Naive thymus-derived CD8-positive, alpha-beta T cell (primary cell): ENCODE measurements at regions of chr17 and their contacts with region 1.

Region 1: DNA sequence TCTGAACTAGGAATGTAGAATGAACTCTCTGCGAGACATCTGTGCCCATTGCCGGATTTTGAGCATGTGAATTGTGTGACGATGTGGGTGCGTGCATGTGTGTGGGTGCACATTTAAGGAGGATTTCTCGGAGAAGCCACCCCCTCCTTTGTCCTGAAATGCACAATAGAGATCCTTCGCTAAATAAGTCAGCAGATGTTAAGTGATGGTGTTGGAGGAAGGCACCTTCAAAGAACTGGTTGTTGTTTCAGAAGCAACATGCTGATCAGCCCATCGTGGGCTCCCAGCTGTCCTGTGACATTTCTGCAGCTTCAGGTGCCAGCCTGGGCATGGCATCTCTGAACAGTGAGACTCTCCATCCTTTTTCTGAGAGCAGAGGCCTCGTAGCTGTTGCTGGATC is 194.9 kb downstream of the MSI2 start:
- DNase-seq: no peak
- ATAC-seq: no peak
- H3K4me3 Mint-ChIP-seq: peak overlapping the region in 2 of 10 donors; percentile 22 to 37
- H3K27ac Mint-ChIP-seq: peak overlapping the region in 2 of 10 donors; percentile 30 to 56
- H3K4me1 Mint-ChIP-seq: peaks cover 28 to 70% (median 67%) of the 10 kb centered on the region in 4 donors
- H3K27me3 Mint-ChIP-seq: no peaks in the 10 kb centered on the region

Region 2: GRCh38 chr17:57406131-57406980 is 44.8 kb before region 1 on chr17:
- POLR2A ChIA-PET with region 1: no interaction called
- DNase-seq: no peak
- ATAC-seq: no peak
- H3K4me3 Mint-ChIP-seq: peak overlapping the region in 7 of 10 donors; percentile 2 to 60 (median 42)
- H3K27ac Mint-ChIP-seq: peak overlapping the region in 8 of 10 donors; percentile 37 to 87 (median 71)
- H3K4me1 Mint-ChIP-seq: peaks cover 53 to 69% (median 58%) of the 10 kb centered on the region in 4 donors
- H3K27me3 Mint-ChIP-seq: no peaks in the 10 kb centered on the region

Region 3: DNA sequence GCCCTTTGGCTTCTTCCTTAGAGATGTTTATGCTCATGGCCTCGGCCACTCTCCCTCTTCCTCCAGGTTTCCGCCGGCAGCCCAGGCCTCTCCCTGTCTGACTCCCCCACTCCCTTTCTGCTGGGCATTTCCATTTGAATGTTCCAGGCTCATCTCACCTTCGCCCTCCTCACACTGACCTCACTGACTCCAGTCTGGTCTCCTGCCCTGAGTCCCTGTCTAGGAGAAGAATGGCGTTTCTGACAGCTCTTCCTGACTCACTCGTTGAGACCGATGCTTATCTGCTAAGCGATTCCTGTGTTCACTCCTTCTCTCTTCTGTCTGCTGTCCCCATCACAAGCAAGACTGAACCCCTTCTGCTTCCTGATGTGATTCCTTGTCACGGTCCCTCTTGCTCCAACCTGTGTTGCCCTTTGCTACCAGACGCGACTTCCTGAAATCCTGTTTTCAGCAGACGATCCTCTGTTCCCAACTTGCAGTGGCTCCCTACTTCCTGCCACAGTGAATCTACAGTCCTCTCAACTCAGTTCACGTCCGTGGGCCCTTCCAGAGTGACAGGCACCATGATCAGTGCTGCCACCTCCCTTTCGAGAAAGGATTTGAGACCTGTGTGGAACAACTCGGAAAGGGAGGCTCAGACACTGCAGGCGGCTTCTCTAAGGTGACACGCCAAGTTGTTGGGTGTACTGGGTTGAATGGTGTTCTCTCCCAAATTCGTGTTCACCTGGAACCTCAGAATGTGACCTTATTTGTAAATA is 18.5 kb before region 1 on chr17:
- POLR2A ChIA-PET with region 1: no interaction called
- DNase-seq: no peak
- ATAC-seq: no peak
- H3K4me3 Mint-ChIP-seq: no peak overlapping the region
- H3K27ac Mint-ChIP-seq: peak overlapping the region in 4 of 10 donors; percentile 26 to 87 (median 50)
- H3K4me1 Mint-ChIP-seq: peaks cover 32 to 68% (median 47%) of the 10 kb centered on the region in 4 donors
- H3K27me3 Mint-ChIP-seq: no peaks in the 10 kb centered on the region

Region 4: DNA sequence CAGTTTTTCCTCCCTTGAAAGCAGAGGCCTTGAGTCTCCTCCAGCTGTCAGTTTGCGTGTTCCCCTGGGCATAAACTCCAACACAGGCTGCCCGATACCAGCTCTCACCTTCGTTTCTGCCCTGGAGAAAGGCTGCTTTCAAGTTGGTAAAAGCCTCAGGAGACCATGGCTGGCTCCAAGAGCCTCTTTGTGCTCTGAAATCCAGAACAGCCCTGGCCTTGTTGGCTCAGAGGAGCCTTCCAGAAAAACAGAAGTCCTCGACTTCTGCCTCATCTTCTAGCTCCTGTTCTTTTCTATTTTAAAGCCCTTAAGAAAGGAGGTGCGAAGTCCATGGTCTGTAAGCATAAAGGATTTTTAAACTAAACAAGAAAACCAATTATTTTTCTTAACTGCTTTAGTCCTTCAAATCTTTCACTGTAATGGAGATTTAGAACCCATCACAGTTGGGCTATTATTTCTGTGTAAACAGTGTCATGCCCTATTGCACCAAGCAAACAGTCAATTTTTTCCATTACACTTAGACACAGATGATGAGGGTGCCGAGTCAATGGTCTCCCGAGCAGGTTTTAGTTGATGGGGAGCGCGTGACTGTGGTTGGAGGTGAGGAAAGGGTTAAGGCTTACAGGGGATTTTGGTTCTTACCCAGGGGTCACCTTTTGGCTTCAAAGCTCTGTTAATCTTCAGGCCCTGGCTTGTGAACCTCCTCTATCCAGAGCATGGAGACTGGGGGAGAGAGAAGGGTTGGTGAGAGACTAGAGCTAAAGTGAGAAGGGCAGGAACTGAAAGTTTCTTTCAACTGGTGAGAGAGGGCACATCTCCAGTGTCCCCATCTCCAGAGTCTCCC is 18.0 kb after region 1 on chr17:
- POLR2A ChIA-PET with region 1: interaction called, 12 read pairs
- DNase-seq: no peak
- ATAC-seq: no peak
- H3K4me3 Mint-ChIP-seq: no peak overlapping the region
- H3K27ac Mint-ChIP-seq: peak overlapping the region in 3 of 10 donors; percentile 35 to 81 (median 50)
- H3K4me1 Mint-ChIP-seq: peaks cover 24 to 51% (median 43%) of the 10 kb centered on the region in 4 donors
- H3K27me3 Mint-ChIP-seq: no peaks in the 10 kb centered on the region